ENCODE measurements at regions of chr12 and their contacts with region 1.

Region 1: DNA sequence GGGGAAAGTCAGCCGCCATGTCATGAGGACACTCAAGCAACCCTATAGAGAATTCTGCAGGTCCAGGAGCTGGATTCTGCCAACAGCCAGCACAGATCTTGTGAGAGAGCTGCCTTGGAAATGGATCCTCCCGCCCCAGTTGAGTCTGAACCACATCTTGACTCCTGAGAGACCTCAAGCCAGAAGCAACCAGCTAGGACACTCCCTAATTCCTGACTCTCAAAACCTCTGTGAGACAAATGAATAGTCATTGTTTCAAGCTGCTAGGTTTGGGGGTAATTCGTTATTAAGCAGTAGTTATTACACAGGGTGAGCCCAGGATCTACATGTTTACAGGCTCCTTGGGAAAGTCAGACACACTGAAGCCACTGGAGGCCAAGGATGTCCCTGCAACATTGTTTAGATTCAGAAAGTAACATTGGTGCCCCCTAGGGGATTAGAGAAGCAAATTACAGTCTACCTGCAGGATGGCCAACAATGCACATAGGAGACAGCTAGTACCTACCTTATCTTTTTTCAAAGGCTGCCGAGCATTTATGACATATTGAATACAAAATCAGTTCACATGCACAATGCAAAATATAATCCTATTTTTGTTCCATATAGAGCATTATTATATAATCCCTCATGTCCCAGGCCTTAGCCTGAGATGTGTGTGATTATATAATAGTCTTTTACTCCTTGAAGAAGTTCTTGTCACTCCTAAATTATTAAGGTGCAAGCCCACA is 57.9 kb upstream of the FICD start:
- DNase-seq: no peak
- ATAC-seq: peak; percentile 95
- H3K4me3 Mint-ChIP-seq: no peak overlapping the region
- H3K27ac Mint-ChIP-seq: peak overlapping the region; percentile 3
- H3K4me1 Mint-ChIP-seq: peaks cover 24% of the 10 kb centered on the region
- H3K27me3 Mint-ChIP-seq: no peaks in the 10 kb centered on the region
- CTCF ChIP-seq: peak; percentile 50; the same call in 1 of the 2 replicates

Region 2: GRCh38 chr12:108446766-108447165 is 10.4 kb before region 1 on chr12:
- CTCF ChIA-PET with region 1: interaction called, 11 read pairs
- POLR2A ChIA-PET with region 1: no interaction called
- DNase-seq: no peak
- ATAC-seq: no peak
- H3K4me3 Mint-ChIP-seq: no peak overlapping the region
- H3K27ac Mint-ChIP-seq: peak overlapping the region; percentile 89
- H3K4me1 Mint-ChIP-seq: peaks cover 67% of the 10 kb centered on the region
- H3K27me3 Mint-ChIP-seq: no peaks in the 10 kb centered on the region
- CTCF ChIP-seq: no peak

Region 3: DNA sequence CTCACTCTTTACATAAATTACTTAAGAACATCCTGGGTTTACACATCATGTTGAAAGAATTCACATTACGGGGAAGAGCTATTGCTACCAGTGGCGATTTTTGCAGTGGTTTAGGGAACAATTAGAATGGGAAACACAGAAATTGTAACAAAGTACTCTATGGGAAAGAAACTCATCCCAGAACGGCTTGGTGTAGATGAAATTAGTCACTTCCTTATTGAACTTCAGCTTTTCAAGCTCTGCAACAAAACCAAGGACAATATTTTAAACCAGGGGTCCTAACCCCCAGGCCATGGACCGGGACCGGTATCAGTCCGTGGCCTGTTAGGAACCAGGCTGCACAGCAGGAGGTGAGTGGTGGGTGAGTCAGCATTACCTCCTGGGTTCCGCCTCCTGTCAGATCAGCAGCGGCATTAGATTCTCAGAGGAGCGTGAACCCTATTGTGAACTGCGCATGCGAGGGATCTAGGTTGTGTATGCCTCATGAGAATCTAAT is 25.6 kb after region 1 on chr12:
- CTCF ChIA-PET with region 1: no interaction called
- POLR2A ChIA-PET with region 1: no interaction called
- DNase-seq: peak; percentile 25
- ATAC-seq: no peak
- H3K4me3 Mint-ChIP-seq: no peak overlapping the region
- H3K27ac Mint-ChIP-seq: no peak overlapping the region
- H3K4me1 Mint-ChIP-seq: peaks cover 13% of the 10 kb centered on the region
- H3K27me3 Mint-ChIP-seq: no peaks in the 10 kb centered on the region; the same call in 1 of the 2 replicates
- CTCF ChIP-seq: no peak

Region 4: DNA sequence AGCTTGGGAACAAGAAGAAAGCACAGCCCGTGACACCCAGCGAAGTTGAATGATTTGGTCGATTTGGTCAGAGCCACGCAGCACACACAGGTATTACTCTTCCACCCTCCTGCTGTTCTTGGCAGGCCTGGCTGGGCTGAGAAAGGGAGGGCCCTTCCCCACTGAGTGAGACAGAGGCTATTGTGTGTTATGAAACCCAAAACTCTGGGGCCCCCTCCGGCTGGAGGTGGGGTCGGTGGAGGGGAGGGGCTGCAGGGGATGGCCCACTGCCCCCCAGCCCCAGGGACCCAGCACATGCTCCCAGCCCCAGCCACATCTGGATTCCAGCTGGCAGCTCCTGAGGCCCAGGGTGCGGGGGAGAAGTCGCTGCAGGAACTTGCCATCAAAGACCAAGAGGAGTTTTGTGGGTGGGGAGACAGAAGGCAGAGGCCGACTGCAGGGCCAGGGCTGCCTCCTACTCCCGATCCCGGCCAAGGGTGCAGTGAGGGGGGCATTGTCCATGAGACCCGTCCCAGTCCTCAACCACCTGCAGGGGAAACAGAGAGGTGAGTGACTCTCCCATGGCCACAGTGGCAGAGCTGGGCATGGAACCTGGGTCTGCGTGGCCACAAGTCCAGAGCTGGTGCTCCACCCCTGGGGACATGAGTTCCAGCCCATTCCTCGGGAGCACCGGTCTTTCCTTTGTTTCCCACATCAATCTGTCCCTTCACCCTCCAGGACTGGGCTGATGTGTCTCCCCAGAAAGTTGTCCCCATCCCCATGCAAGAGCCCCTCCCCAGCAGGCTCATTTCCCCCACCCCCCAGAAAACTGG is 132.1 kb after region 1 on chr12:
- CTCF ChIA-PET with region 1: no interaction called
- POLR2A ChIA-PET with region 1: no interaction called
- DNase-seq: no peak
- ATAC-seq: peak; percentile 56
- H3K4me3 Mint-ChIP-seq: no peak overlapping the region
- H3K27ac Mint-ChIP-seq: no peak overlapping the region
- H3K4me1 Mint-ChIP-seq: peaks cover 12% of the 10 kb centered on the region
- H3K27me3 Mint-ChIP-seq: no peaks in the 10 kb centered on the region
- CTCF ChIP-seq: no peak